ENCODE measurements at regions of chr1 and their contacts with region 1.

Region 1: DNA sequence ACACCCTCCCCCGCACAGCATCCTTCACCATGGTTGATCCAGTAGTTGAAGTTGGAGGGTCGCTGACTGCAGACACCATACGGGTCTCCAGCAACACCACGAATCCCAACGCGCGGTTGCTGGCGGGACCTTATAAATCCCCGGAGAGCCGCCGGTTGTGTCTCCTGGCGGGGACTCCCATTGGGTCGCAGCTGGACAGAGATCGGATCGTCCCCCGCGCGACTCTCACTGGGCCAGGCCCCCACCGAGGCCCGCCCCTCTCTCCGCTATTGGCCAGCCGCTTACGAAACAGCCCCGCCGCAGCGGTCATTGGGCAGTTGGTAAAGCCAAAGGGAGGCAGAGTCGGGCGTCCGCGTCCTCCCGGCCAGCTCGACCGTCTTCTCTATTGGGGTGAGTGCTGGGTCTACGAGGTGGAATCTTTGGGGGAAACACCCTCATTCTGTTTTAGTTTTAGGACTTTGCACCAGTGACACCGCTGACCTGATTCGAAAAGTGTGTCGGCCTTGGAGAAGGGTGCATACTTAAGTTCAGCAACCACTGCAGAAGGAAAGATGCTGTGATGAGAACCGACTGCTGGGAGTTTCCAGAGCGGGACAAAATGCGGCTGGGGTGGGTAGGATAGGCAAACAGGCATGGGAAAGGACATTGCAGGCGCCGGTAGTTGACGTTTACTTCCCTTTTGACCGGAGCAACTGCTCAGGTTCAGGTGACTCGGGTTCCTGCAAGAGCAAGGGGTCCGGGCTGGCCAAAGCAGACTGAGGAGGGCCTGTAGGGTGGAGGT is 27.3 kb downstream of the RABIF start:
- DNase-seq: peak; percentile 63
- ATAC-seq: peak; percentile 97
- H3K4me3 ChIP-seq: peak overlapping the region; percentile 54 to 66 (median 61)
- H3K4me3 Mint-ChIP-seq: peak overlapping the region; percentile 88
- H3K27ac ChIP-seq: no peak overlapping the region
- H3K27ac Mint-ChIP-seq: no peak overlapping the region
- H3K4me1 ChIP-seq: peaks cover 10 to 16% of the 10 kb centered on the region in 2 donors
- H3K4me1 Mint-ChIP-seq: peaks cover 14% of the 10 kb centered on the region
- H3K27me3 ChIP-seq: peaks cover 0 to 26% (median 10%) of the 10 kb centered on the region in 4 experiments
- H3K27me3 Mint-ChIP-seq: peaks cover 20% of the 10 kb centered on the region
- CTCF ChIP-seq: no peak

Region 2: DNA sequence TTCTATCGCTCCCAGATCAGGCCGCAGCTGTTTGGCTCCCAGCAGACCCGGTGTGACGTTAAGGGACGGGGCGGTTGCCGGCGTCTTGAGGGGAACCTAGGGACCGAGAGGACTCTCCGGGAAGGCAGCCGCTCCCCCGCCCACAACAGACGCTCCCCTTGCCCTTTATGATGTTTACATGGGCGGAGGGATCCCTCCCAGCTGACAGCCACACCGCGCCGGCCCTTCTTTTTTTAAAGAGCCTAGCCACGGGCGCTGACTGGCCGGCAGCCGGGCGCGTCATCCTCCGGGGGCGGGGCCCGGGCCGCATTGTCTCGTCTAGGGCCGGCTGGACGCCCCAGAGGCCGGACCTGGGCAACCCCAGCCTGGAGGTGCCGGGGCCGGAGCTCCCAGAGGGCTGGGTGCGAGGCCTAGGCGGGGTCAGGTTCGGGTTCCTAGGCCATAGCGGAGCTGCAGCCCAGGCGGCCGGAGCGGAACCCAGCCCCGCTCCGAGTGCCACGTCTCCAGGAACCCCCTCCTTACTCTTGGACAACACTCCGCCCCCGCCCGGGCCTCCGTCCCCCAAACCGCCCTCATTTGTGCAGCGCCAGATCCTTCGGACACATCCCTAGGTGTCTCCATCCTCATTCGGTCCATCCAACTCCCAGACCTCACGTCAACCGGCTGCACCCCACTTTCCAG is 50.9 kb before region 1 on chr1 and contains the start of gene PCAT6:
- CTCF ChIA-PET with region 1: no interaction called
- POLR2A ChIA-PET with region 1: no interaction called
- intact Hi-C with region 1: loop called (anchors 1 kb)
- DNase-seq: peak; percentile 93
- ATAC-seq: peak; percentile 81
- H3K4me3 ChIP-seq: peak within 1 kb of the TSS; percentile 72 to 91 (median 86)
- H3K4me3 Mint-ChIP-seq: peak within 1 kb of the TSS; percentile 87
- H3K27ac ChIP-seq: peak within 1 kb of the TSS; percentile 35 to 69
- H3K27ac Mint-ChIP-seq: peak within 1 kb of the TSS; percentile 91
- H3K4me1 ChIP-seq: peaks cover 23 to 33% of the 10 kb centered on the region in 2 donors
- H3K4me1 Mint-ChIP-seq: peaks cover 32% of the 10 kb centered on the region
- H3K27me3 ChIP-seq: peaks cover 0 to 15% (median 2%) of the 10 kb centered on the region in 4 experiments
- H3K27me3 Mint-ChIP-seq: peaks cover 6% of the 10 kb centered on the region
- CTCF ChIP-seq: no peak
- total RNA-seq, gene PCAT6: 1.6 TPM in 1 of 2 replicates, not detected in the other

Region 3: DNA sequence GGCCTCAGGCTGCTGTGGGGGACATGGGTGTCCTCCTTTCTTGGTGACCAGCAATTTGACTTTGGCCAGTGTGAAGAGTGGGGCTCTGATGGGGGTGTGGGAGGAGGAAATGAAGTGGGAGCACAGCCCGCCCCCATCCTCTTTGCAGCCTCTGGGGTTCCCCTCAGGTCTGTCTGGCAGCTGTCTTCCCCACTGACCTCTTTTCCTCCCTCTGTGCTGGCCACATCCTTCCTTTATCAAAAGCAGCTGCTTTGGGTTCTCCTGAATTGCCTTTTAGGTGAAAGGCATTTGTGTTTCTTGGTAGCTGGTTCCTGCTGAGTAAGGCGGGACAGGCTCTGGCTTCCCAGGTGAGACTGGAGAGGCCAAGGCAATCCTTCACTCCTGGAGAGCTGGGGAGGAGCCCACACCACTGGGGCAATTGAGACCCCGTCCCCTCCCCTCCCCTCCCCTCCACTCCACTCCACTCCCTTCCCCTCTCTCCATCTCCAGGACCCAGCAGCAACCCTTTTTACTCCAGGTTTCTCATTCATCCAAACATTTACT is 26.0 kb before region 1 on chr1:
- CTCF ChIA-PET with region 1: no interaction called
- POLR2A ChIA-PET with region 1: no interaction called
- intact Hi-C with region 1: no loop called
- DNase-seq: no peak
- ATAC-seq: no peak
- H3K4me3 ChIP-seq: no peak overlapping the region
- H3K4me3 Mint-ChIP-seq: no peak overlapping the region
- H3K27ac ChIP-seq: no peak overlapping the region
- H3K27ac Mint-ChIP-seq: no peak overlapping the region
- H3K4me1 ChIP-seq: peaks cover 19 to 29% of the 10 kb centered on the region in 2 donors
- H3K4me1 Mint-ChIP-seq: peaks cover 22% of the 10 kb centered on the region
- H3K27me3 ChIP-seq: peaks cover 0 to 4% (median 0%) of the 10 kb centered on the region in 4 experiments
- H3K27me3 Mint-ChIP-seq: peaks cover 8% of the 10 kb centered on the region
- CTCF ChIP-seq: no peak

Measured in B cell (primary cell).